ENCODE measurements at regions of chr1 and their contacts with region 1.

Region 1: GRCh38 chr1:84936116-84936810 is 43.3 kb upstream of the LPAR3 start:
- DNase-seq: peak; percentile 49
- H3K4me3 Mint-ChIP-seq: no peak overlapping the region
- H3K27ac Mint-ChIP-seq: no peak overlapping the region
- H3K4me1 Mint-ChIP-seq: peaks cover 4% of the 10 kb centered on the region
- H3K27me3 Mint-ChIP-seq: peaks cover 5% of the 10 kb centered on the region

Region 2: GRCh38 chr1:84758968-84759491 is 177.2 kb before region 1 on chr1:
- CTCF ChIA-PET with region 1: interaction called, 13 read pairs
- DNase-seq: no peak
- H3K4me3 Mint-ChIP-seq: no peak overlapping the region
- H3K27ac Mint-ChIP-seq: no peak overlapping the region
- H3K4me1 Mint-ChIP-seq: peaks cover 6% of the 10 kb centered on the region
- H3K27me3 Mint-ChIP-seq: peaks cover 20% of the 10 kb centered on the region

Region 3: DNA sequence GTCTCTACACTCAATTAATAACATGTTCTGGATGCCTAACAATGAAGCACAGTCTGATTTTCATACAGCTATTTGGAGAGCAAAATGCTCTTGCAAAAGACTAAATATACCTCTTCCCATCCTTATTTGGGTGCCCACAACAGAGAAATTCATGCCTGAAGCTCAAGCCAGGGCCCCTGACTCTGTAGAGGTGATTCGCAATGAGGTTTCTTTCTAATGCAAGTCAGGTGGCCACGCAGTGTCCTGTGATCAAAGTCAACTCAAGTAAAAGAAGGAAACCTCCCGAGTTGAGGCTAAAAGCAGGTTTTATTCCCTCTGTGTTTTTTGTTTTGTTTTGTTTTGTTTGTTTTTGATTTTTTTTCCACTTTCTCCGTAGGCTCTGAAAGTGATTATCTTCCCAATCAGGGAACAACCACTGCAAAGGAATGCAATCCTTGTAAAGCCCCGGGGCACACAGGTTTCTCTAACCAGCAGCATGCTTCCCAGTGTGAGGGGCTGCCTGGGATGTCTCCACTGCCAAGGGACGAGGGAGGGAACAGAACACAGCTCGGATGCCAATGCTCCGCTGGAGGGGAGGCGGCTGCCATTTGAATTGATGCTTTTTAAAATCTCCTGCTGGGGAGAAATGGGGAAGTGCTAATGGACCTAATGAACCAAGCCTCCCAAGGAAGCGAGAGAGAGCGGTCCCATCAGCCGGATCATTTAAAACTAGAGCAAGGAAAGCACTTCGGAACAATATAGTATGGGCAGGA is 172.2 kb before region 1 on chr1:
- CTCF ChIA-PET with region 1: interaction called, 13 read pairs
- DNase-seq: no peak
- H3K4me3 Mint-ChIP-seq: no peak overlapping the region
- H3K27ac Mint-ChIP-seq: no peak overlapping the region
- H3K4me1 Mint-ChIP-seq: peaks cover 2% of the 10 kb centered on the region
- H3K27me3 Mint-ChIP-seq: peaks cover 38% of the 10 kb centered on the region

Region 4: DNA sequence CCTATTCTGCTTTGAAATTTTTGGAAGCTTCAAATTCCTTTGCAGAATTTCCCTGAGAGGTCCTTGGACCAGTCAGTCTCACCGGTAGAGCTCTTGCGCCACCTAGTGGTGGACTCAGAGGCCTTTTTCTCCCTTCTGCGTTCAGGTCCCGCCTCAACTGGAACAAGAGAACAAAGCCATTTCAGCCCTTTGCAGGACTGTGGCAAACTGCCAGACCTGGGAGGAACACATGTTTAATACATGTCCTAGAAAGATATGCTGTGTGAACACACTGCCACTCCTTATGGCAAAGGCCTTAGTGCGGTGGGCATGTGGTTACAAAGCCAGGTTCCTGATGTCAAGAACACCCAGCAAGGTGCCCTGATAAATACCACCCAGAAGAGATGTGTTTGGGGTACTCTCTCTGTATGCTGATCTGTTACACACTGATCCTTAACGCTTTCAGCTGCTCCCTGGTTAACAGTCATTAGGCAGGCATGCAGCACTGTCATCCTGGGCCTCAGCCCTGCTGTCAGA is 163.8 kb before region 1 on chr1:
- CTCF ChIA-PET with region 1: interaction called, 20 read pairs
- DNase-seq: peak; percentile 84
- H3K4me3 Mint-ChIP-seq: no peak overlapping the region
- H3K27ac Mint-ChIP-seq: no peak overlapping the region
- H3K4me1 Mint-ChIP-seq: no peaks in the 10 kb centered on the region
- H3K27me3 Mint-ChIP-seq: peaks cover 29% of the 10 kb centered on the region

Region 5: GRCh38 chr1:84781946-84782771 is 154.1 kb before region 1 on chr1:
- CTCF ChIA-PET with region 1: interaction called, 48 read pairs
- DNase-seq: peak; percentile 84
- H3K4me3 Mint-ChIP-seq: peak overlapping the region; percentile 65
- H3K27ac Mint-ChIP-seq: no peak overlapping the region
- H3K4me1 Mint-ChIP-seq: peaks cover 33% of the 10 kb centered on the region
- H3K27me3 Mint-ChIP-seq: peaks cover 9% of the 10 kb centered on the region

Region 6: GRCh38 chr1:84923317-84923716 is 12.9 kb before region 1 on chr1:
- CTCF ChIA-PET with region 1: interaction called, 13 read pairs
- DNase-seq: no peak
- H3K4me3 Mint-ChIP-seq: no peak overlapping the region
- H3K27ac Mint-ChIP-seq: no peak overlapping the region
- H3K4me1 Mint-ChIP-seq: no peaks in the 10 kb centered on the region
- H3K27me3 Mint-ChIP-seq: peaks cover 1% of the 10 kb centered on the region

Measured in activated naive CD4-positive, alpha-beta T cell treated with anti-CD3 and anti-CD28 coated beads, Interleukin-2, amount 10 ng/mL, durations not matched to agents 7 days and 5 days (primary cell).